ENCODE measurements at regions of chrX and their contacts with region 1.

Region 1: GRCh38 chrX:66914080-66914479 is 275.2 kb upstream of the EDA2R start:
- DNase-seq: no peak
- ATAC-seq: 0 out of 3 replicates have a peak, but pooled peaks have one; percentile 21
- H3K4me3 ChIP-seq: no peak overlapping the region
- H3K27ac ChIP-seq: no peak overlapping the region
- H3K4me1 ChIP-seq: no peaks in the 10 kb centered on the region
- H3K27me3 ChIP-seq: no peaks in the 10 kb centered on the region
- CTCF ChIP-seq: no peak
- EP300 ChIP-seq: no peak
- POLR2A ChIP-seq: no peak
- RAD21 ChIP-seq: no peak

Region 2: DNA sequence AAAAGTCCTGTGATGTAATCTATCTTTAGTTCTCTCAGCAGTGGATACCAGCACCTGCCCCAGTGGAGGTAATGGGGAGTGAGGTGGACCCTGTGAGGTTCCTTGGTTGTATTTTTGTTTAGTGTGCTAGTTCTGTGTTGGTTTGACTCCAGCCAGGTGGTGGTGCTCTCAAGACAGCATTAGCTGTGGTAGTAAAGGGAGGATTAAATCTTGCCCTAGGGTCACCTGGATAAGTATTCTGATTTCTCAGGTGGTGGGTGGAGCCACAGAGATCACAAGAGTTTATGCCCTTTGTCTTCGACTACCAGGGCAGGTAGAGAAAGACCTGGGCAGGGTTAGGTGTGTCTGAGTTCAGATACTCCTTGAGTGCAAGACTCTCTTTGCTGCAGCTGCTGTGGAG is 98.9 kb before region 1 on chrX:
- CTCF ChIA-PET with region 1: no interaction called
- POLR2A ChIA-PET with region 1: no interaction called
- RAD21 ChIA-PET with region 1: no interaction called
- SMC1A ChIA-PET with region 1: no interaction called
- in situ Hi-C with region 1: loop called (anchors 25 kb)
- intact Hi-C with region 1: no loop called
- DNase-seq: no peak
- ATAC-seq: no peak
- H3K4me3 ChIP-seq: no peak overlapping the region
- H3K27ac ChIP-seq: no peak overlapping the region
- H3K4me1 ChIP-seq: no peaks in the 10 kb centered on the region
- H3K27me3 ChIP-seq: no peaks in the 10 kb centered on the region
- CTCF ChIP-seq: no peak
- EP300 ChIP-seq: no peak
- POLR2A ChIP-seq: no peak
- RAD21 ChIP-seq: no peak